Activated CD4-positive, alpha-beta memory T cell treated with anti-CD3 and anti-CD28 coated beads for 36 hours (primary cell): ENCODE measurements at regions of chr12 and their contacts with region 1.

Region 1: DNA sequence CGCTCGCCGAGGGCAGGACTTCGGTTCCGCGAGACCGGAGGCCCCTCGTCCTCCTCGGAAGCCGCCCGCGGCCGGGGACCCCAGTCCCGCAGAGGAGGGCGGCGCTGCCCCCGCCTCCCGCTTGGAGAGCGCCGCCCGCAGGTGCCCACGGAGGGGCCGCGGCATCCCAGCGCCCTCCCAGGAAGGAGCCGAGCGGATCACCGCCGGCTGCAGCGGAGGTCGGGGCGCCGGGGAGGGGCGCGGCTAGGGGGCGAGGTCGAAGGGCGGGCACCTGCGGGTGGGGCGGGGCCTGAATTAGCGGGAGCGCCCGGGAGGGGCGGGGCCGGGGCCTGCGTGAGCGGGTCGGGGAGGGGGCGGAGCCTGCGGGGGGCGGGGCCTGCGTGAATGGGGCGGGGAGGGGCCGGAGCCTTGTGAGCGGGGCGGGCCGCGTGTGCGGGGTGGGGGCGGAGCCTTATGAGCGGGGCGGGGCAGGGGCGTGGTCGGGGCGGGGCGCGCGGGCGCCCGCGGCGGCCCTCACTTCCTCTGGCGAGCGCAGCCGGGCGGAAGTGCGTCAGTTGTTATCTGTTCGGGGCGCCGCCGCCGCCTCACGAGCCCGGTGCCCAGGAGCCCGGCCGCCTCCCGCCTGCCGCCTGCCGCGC is at the start of gene FBRSL1:
- DNase-seq: peak; percentile 95
- H3K4me3 Mint-ChIP-seq: peak within 1 kb of the TSS; percentile 80
- H3K27ac Mint-ChIP-seq: peak within 1 kb of the TSS; percentile 85
- H3K4me1 Mint-ChIP-seq: peaks cover 59% of the 10 kb centered on the region
- H3K27me3 Mint-ChIP-seq: no peaks in the 10 kb centered on the region
- total RNA-seq, gene FBRSL1: 38.8 to 41.7 TPM

Region 2: DNA sequence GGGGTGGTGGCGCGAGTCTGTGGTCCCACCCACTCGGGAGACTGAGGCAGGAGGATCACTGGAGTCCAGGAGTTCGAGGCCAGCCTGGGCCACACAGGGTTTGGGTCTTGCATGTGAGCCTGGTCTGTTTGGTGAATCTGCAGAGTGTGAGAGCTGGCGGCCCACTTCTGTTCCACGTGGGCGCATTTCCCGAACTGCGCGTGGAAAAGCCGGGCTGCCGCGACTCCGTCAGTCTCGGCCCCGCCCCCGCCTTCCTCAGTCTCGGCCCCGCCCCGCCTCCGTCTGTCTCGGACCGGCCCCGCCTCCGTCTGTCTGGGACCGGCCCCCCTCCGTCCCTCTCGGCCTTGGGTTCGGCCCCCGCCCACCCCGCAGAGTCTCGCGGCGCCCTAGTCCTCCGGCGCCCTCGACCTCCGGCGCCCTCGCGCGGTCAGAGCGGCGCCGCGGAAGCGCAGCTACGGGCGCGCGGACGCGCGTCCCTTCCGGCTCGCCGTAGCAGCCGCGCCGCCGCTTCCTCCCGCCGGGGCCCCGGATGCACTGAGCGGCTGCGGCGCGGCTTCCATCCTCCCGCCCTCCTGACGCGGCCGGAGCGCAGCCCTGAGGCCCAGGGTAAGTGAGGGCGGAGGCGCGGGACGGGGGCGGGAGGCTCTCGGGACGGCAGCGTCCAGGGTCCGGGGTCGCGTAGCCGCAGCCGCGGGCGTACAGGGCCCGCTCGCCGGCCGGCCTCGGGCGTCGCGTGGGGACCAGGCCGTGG is 540.1 kb before region 1 on chr12 and contains the start of gene EP400:
- CTCF ChIA-PET with region 1: no interaction called
- POLR2A ChIA-PET with region 1: no interaction called
- intact Hi-C with region 1: loop called (anchors 5 kb)
- DNase-seq: peak; percentile 95
- H3K4me3 Mint-ChIP-seq: peak within 1 kb of the TSS; percentile 91
- H3K27ac Mint-ChIP-seq: peak within 1 kb of the TSS; percentile 87
- H3K4me1 Mint-ChIP-seq: peaks cover 33% of the 10 kb centered on the region
- H3K27me3 Mint-ChIP-seq: no peaks in the 10 kb centered on the region
- total RNA-seq, gene EP400: 39.9 to 45.5 TPM

Region 3: DNA sequence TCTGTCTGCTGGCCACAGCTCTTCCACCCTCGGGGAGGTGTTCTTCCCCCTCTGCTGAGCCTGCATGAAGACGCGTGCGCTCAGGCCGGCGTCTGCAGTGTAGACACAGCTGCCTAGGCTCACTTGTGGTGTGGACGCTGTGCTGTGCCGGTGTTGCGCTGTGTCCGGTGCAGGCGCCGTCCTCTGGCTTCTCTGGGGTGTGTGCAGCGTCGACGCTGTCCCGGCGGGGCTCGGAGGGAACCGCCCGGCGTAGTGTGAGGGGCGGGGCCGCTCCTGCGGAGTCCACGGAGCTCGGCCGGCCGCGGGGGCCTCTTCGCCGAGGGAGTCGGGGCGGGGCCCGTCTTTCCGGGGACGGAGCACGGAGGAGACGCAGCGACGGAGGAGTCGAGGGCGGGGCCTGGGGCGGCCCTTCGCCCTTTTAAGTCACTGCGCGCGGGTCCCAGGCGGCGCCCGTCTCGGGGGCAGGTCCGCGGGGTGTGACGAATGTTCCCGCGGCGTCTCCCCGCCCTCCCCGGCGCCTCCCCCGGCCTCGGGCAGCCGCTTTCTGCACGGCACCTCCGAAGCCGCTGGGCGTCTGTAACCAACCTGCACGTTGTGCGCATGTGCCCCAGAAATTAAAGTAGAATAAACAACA is 300.2 kb before region 1 on chr12:
- CTCF ChIA-PET with region 1: no interaction called
- POLR2A ChIA-PET with region 1: no interaction called
- intact Hi-C with region 1: loop called (anchors 5 kb)
- DNase-seq: peak; percentile 96
- H3K4me3 Mint-ChIP-seq: peak overlapping the region; percentile 93
- H3K27ac Mint-ChIP-seq: peak overlapping the region; percentile 80
- H3K4me1 Mint-ChIP-seq: peaks cover 40% of the 10 kb centered on the region
- H3K27me3 Mint-ChIP-seq: no peaks in the 10 kb centered on the region

Region 4: DNA sequence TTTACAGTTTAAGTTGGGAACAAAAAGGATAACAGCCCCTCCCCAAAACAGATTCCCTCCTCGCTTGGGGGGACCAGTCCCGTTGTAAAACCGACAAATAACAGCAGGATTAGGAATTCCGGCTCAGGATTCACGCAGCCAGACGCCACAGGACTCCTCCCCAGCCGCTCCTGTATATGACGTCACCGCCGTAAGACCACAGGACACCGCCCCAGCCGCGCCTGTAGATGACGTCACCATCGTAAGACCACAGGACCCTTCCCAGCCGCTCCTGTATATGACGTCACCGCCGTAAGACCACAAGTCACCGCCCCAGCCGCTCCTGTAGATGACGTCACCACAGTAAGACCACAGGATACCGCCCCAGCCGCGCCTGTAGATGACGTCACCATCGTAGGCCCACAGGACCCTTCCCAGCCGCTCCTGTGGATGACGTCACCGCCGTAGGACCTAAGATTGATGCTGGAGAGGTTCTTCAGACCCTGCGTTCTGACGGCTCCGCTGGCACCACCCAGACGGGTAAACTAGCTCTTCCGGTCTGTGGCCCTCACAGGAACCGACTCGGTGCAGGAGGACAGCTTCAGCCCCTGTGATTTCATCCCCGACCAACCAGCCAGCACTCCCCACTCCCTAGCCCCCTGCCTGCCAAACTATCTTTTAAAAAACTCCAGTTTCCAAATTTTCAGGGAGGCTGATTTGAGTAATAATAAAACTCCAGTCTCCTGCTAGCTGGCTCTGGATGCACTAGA is 43.7 kb before region 1 on chr12:
- CTCF ChIA-PET with region 1: no interaction called
- POLR2A ChIA-PET with region 1: no interaction called
- intact Hi-C with region 1: loop called (anchors 1 kb)
- DNase-seq: peak; percentile 78
- H3K4me3 Mint-ChIP-seq: peak overlapping the region; percentile 91
- H3K27ac Mint-ChIP-seq: peak overlapping the region; percentile 99
- H3K4me1 Mint-ChIP-seq: peaks cover 35% of the 10 kb centered on the region
- H3K27me3 Mint-ChIP-seq: no peaks in the 10 kb centered on the region

Region 5: DNA sequence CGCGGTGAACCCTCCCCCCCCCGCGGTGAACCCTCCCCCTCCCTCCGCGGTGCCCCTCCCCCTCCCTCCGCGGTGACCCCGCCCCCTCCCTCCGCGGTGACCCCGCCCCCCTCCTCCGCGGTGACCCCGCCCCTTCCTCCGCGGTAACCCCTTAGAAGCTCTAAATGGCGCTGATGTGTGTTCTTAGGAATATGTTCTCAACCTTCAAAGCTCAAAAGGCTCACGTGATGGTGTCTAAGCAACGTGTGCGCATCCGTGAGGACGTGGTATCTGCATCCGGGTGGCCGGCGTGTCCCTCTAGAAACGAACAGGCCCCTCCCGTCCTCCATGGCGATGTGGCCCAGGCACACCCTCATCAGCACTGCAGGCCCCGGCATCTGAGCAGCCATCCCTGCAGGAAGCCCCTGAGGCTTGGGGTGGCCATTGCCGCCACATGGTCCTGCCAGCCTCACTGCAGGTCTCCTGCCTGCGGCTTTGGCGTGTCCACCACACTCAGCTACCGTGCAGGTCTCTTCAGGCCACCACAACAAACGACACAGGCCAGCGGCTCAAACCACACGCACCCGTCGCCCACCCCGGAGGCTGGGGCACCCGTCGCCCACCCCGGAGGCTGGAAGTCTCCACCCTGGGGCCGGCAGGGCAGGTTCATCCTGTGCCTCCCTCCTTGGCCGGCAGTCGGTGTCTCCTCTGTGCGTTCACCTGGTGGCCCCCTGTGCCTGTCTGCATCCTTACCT is 14.2 kb before region 1 on chr12:
- CTCF ChIA-PET with region 1: no interaction called
- POLR2A ChIA-PET with region 1: no interaction called
- intact Hi-C with region 1: loop called (anchors 1 kb)
- DNase-seq: peak; percentile 52
- H3K4me3 Mint-ChIP-seq: peak overlapping the region; percentile 55
- H3K27ac Mint-ChIP-seq: peak overlapping the region; percentile 58
- H3K4me1 Mint-ChIP-seq: peaks cover 24% of the 10 kb centered on the region
- H3K27me3 Mint-ChIP-seq: peaks cover 2% of the 10 kb centered on the region

Region 6: DNA sequence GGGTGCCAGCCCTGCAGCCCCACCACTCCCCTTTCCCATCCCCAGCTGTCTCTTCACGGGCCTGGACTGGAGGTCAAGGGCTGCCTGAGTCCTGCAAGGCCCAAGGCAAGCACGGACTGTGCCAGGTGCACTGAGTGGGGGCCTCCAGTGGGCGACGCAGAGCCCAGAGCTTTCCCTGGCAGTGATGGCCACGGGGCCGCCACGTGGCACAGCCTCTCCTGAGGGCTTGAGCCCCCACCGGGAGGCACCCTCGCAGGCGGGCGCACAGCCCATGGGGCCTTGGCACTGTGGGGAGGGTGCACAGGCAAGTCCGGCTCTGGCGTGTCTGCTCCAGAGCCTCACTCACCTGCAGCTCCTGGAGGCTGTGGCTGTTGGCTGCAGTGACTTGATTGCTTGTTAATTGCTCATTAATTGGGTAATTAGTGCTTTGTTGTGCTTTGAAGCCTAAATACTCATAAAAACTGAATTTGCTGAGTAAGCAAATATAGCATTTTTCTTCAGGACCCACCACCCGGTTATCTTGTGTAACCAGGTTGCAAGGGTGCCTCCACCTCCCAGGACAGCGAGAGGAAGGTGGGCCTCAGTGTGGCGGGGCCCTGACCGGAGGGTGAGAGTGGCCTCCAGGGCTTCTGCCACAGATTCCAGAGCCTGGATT is 48.7 kb after region 1 on chr12:
- CTCF ChIA-PET with region 1: no interaction called
- POLR2A ChIA-PET with region 1: no interaction called
- intact Hi-C with region 1: no loop called
- DNase-seq: no peak
- H3K4me3 Mint-ChIP-seq: no peak overlapping the region
- H3K27ac Mint-ChIP-seq: no peak overlapping the region
- H3K4me1 Mint-ChIP-seq: no peaks in the 10 kb centered on the region
- H3K27me3 Mint-ChIP-seq: no peaks in the 10 kb centered on the region

Region 7: GRCh38 chr12:132560614-132561426 is 71.1 kb after region 1 on chr12:
- CTCF ChIA-PET with region 1: interaction called, 4 read pairs
- POLR2A ChIA-PET with region 1: no interaction called
- intact Hi-C with region 1: loop called (anchors 2 kb)
- DNase-seq: peak; percentile 80
- H3K4me3 Mint-ChIP-seq: peak overlapping the region; percentile 70
- H3K27ac Mint-ChIP-seq: no peak overlapping the region
- H3K4me1 Mint-ChIP-seq: peaks cover 15% of the 10 kb centered on the region
- H3K27me3 Mint-ChIP-seq: peaks cover 4% of the 10 kb centered on the region